Activated T-helper 1 cell treated with anti-CD3 and anti-CD28 coated beads, Interleukin-12 subunit alpha, Interleukin-12 subunit beta, Interleukin-2, Interleukin-4 antibody, amounts not matched to agents 30 ng/mL and 10 ng/mL and 1 ng/mL, durations not matched to agents 14 hours and 24 hours and 36 hours (primary cell): ENCODE measurements at regions of chr6 and their contacts with region 1.

Region 1: DNA sequence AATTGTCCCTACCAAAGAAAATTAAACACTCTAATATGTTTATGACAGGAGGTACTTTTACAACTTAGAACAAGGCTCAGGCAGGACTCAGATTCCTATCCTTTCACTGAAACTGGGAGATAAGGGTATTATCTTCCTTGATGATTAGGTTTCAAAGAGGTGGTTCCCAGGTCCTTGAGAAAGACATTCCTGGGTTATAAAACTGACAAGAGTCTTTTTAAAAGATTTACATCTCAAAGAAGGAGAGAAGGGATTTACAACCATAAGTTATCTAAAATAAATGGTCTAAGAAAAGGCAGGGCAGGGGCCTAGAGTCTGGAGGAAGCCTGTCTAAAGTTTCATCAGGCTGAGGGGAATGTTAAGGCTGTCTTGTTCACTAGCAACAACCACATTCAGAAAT is 1492.5 kb downstream of the HACE1 start:
- DNase-seq: no peak
- H3K4me3 Mint-ChIP-seq: no peak overlapping the region
- H3K27ac Mint-ChIP-seq: no peak overlapping the region
- H3K4me1 Mint-ChIP-seq: no peaks in the 10 kb centered on the region
- H3K27me3 Mint-ChIP-seq: no peaks in the 10 kb centered on the region

Region 2: DNA sequence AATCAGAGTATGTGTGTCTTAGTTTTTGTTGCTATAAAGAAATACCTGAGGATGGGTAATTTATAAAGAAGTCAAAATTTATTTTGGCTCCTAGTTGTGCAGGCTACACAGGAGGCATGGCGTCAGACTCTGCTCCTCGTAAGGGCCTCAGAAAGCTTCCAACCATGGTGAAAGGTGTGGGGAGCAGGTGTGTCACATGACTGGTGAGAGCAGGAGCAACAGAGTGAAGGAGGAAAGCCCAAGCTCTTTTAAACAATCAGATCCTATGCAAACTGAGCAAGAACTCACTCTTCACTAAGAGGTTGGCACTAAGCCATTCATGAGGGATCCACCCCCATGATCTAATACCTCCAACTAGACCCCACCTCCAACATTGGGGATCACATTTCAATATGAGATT is 31.8 kb before region 1 on chr6:
- intact Hi-C with region 1: loop called (anchors 1 kb)
- DNase-seq: no peak
- H3K4me3 Mint-ChIP-seq: no peak overlapping the region
- H3K27ac Mint-ChIP-seq: no peak overlapping the region
- H3K4me1 Mint-ChIP-seq: no peaks in the 10 kb centered on the region
- H3K27me3 Mint-ChIP-seq: no peaks in the 10 kb centered on the region